Mammary epithelial cell (primary cell): ENCODE measurements at regions of chr19 and their contacts with region 1.

Region 1: DNA sequence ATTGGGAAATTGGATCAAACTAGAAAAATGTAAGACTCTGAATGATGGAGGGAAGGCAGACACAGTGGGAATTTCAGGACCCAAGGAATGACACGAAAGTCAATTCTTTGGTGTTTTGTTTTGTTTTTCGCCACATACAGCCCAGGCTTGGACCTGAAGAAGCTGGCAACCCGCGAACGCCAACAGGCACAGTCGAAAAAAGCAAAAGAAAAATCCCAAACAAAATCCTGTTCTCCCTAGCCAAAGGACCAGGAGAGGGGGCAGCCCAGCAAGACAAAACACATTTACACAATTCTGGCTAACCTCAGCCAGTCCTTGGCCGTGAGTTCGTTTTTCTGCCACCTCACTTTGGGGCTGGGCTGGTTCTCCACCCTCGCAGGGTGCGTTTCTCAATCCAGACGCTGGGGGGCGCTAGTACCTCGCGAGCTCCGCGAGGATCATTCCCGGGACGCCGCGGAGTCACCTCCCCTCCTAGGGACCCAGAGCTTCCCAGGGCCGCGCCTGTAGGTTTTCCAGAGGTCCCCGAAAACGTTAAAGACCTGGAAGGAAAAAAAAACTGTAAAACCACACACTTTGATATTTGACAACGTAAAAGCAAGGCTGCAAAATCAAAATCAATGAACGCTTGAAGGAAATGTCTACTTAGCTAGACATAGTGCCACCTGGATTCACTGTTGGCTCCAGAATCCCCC is 34.9 kb upstream of the TPM4 start:
- DNase-seq: peak; percentile 61
- H3K4me3 ChIP-seq: peak overlapping the region in 1 of 3 experiments; percentile 1
- H3K27ac ChIP-seq: no peak overlapping the region
- H3K4me1 ChIP-seq: no peaks in the 10 kb centered on the region
- H3K27me3 ChIP-seq: no peaks in the 10 kb centered on the region
- CTCF ChIP-seq: peak; percentile 84 to 94

Region 2: DNA sequence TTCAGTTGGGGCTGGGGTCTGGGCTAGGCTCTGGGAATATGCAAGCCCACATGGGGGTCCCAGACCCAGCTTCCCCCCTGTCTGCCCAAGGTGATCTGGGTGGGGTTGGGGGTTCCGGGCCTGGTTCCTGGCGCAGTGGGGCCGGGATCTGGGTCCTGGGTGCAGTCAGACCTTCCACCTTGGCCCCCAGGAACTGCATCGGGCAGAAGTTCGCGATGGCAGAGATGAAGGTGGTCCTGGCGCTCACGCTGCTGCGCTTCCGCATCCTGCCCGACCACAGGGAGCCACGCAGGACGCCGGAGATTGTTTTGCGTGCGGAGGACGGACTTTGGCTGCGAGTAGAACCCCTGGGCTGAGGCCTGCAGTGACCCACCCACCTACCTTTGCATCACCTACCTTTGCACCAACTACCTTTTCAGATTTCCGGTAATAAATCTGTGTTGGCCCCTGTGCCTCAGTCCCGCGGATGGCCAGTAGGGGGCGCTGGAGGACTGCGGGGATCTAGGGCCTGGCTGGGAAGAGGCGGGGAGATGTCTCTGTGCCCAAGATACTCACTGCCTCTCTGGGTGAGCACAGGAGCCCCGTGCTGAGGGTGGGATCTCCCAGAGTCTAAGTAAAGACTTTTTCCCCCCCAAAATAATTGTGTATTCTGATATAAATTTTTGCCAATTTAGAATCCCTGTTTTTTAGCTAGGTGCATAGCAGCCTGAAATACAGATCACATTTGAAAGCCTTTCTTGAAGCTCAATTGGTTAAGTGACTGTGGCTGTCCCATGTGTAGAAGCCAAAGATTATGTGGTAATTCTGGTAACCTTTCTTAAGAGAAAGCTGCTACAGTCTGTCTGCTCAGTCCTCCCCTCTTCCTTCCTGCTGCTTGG is 412.2 kb before region 1 on chr19:
- CTCF ChIA-PET with region 1: no interaction called
- dilution Hi-C with region 1: no loop called
- in situ Hi-C with region 1: loop called in 1 of 2 experiments (anchors 25 kb)
- intact Hi-C with region 1: loop called (anchors 1 kb)
- DNase-seq: peak; percentile 64
- H3K4me3 ChIP-seq: peak overlapping the region in 1 of 3 experiments; percentile 12
- H3K27ac ChIP-seq: no peak overlapping the region
- H3K4me1 ChIP-seq: peaks cover 3% of the 10 kb centered on the region
- H3K27me3 ChIP-seq: no peaks in the 10 kb centered on the region
- CTCF ChIP-seq: peak; percentile 89 to 94

Region 3: DNA sequence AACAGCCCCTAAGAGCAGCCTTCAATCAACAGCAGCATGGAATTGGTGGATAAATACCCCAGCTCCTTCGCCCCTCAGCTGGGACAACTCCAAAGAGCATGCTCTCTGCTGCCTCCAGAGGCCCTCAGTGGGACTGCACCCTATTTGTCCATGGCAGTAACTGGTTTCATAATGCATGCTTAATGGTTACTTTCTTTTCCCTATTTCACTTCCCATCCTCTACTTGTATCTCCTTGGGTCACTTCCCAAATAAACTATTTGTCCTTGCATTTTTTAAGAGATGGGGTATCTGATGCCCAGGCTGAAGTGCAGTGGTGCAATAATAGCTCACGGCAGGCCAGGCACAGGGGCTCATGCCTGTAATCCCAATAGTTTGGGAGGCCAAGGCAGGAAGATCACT is 21.3 kb after region 1 on chr19:
- CTCF ChIA-PET with region 1: interaction called, 13 read pairs
- dilution Hi-C with region 1: no loop called
- in situ Hi-C with region 1: no loop called
- intact Hi-C with region 1: loop called (anchors 2 kb)
- DNase-seq: no peak
- H3K4me3 ChIP-seq: no peak overlapping the region
- H3K27ac ChIP-seq: no peak overlapping the region
- H3K4me1 ChIP-seq: peaks cover 12% of the 10 kb centered on the region
- H3K27me3 ChIP-seq: no peaks in the 10 kb centered on the region
- CTCF ChIP-seq: peak; percentile 87 to 98

Region 4: DNA sequence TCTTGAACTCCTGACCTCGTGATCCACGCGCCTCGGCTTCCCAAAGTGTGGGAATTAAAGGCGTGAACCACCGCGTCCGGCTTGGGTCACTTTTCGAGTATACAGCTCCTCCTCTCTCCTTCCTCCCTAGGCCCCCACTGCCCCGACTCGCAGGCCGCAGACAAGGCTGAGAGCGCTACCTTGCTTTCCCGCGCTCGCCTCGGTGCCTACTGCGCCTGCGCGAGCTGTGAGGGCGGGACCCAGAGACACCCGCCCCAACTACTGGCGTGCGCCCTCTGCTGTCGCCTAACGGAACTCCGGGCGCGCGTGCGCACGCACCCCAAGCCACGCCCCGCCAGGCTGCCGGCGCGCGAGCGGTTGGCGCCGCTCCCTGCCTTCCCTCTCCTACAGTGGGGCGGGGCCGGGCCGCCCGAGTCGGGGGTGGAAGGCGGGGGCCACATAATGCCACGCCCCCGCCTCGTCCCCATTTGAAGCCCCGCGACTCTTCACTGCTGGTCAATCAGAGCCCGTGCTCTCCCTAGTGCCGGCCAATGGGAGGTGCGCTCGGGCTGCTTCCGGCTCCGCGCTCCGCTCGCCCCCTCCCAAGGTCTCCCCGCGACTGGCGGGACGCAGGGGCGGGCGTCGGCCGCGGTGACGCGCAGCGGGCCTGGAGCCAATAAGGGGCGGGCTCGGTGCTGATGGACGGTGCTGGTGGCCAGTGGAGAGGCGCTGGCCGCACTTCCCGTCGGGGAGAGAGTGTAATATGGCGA is 69.9 kb after region 1 on chr19 and contains the start of gene RAB8A:
- CTCF ChIA-PET with region 1: interaction called, 4 read pairs
- dilution Hi-C with region 1: no loop called
- in situ Hi-C with region 1: no loop called
- intact Hi-C with region 1: loop called (anchors 1 kb)
- DNase-seq: peak; percentile 99
- H3K4me3 ChIP-seq: peak within 1 kb of the TSS; percentile 85 to 92 (median 86)
- H3K27ac ChIP-seq: peak within 1 kb of the TSS; percentile 71
- H3K4me1 ChIP-seq: peaks cover 10% of the 10 kb centered on the region
- H3K27me3 ChIP-seq: no peaks in the 10 kb centered on the region
- CTCF ChIP-seq: peak; percentile 63 to 82
- total RNA-seq, gene RAB8A: 46.0 to 70.1 TPM

Region 5: GRCh38 chr19:16382775-16383543 is 341.5 kb after region 1 on chr19:
- CTCF ChIA-PET with region 1: no interaction called
- dilution Hi-C with region 1: no loop called
- in situ Hi-C with region 1: loop called in 1 of 2 experiments (anchors 25 kb)
- intact Hi-C with region 1: loop called (anchors 1 kb)
- DNase-seq: peak; percentile 59
- H3K4me3 ChIP-seq: no peak overlapping the region
- H3K27ac ChIP-seq: no peak overlapping the region
- H3K4me1 ChIP-seq: no peaks in the 10 kb centered on the region
- H3K27me3 ChIP-seq: no peaks in the 10 kb centered on the region
- CTCF ChIP-seq: peak; percentile 81 to 85